CD4-positive, alpha-beta T cell (primary cell): ENCODE measurements at regions of chr5 and their contacts with region 1.

Region 1: GRCh38 chr5:132055808-132056609 is 4.4 kb upstream of the IL3 start:
- DNase-seq: peak in 11 of 14 experiments; percentile 16 to 84 (median 36)
- ATAC-seq: peak; percentile 74
- H3K4me3 ChIP-seq: no peak overlapping the region
- H3K4me3 Mint-ChIP-seq: peak overlapping the region; percentile 23
- H3K27ac ChIP-seq: peak overlapping the region in 1 of 2 donors; percentile 79
- H3K27ac Mint-ChIP-seq: peak overlapping the region; percentile 83
- H3K4me1 ChIP-seq: peaks cover 66% of the 10 kb centered on the region
- H3K4me1 Mint-ChIP-seq: peaks cover 42% of the 10 kb centered on the region
- H3K27me3 ChIP-seq: peaks cover 0 to 2% of the 10 kb centered on the region in 2 experiments
- H3K27me3 Mint-ChIP-seq: no peaks in the 10 kb centered on the region
- CTCF ChIP-seq: no peak

Region 2: DNA sequence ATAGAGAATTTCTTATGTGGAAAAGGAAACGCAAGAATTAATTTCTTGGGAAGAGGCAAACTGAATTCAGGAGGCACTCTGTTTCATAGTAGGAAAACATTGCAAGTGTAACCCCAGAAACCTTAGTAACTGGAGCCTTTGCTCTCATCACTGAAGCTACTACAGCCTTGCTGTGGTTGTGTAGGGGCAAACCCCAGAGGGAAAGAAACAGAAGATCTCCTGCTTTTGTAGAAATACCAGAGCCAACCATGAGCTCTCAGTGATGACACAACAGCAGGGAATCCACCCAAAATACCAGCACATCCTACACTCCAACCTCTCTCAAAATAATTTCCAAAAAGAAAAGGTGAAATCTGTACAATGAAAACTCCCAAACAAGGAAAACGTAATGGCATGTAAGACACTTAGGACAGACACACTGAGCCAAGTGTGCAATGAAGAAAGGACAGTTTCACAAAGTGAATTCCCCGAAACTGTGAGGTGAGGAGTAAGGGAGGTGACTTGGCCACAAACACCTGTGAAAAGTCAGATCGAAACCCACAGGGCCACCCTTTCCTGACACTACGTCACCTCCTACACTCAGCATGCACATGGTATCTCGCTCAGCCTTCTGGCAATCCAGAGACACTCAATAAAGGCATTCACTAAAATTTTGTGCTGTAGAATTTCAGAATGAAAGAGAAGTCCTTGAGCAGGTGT is 36.0 kb before region 1 on chr5:
- CTCF ChIA-PET with region 1: no interaction called
- POLR2A ChIA-PET with region 1: no interaction called
- intact Hi-C with region 1: loop called in 1 of 2 experiments (anchors 5 kb)
- DNase-seq: peak; percentile 29 to 91 (median 54)
- ATAC-seq: peak; percentile 94
- H3K4me3 ChIP-seq: no peak overlapping the region
- H3K4me3 Mint-ChIP-seq: peak overlapping the region; percentile 26
- H3K27ac ChIP-seq: peak overlapping the region in 1 of 2 donors; percentile 55
- H3K27ac Mint-ChIP-seq: peak overlapping the region; percentile 85
- H3K4me1 ChIP-seq: peaks cover 48% of the 10 kb centered on the region
- H3K4me1 Mint-ChIP-seq: peaks cover 46% of the 10 kb centered on the region
- H3K27me3 ChIP-seq: no peaks in the 10 kb centered on the region
- H3K27me3 Mint-ChIP-seq: peaks cover 17% of the 10 kb centered on the region
- CTCF ChIP-seq: no peak